ENCODE measurements at regions of chr5 and their contacts with region 1.

Region 1: GRCh38 chr5:153147891-153148623 is 342.4 kb upstream of the GRIA1 start:
- ATAC-seq: peak in 7 of 8 experiments; percentile 39 to 98 (median 65)
- H3K4me3 ChIP-seq: no peak overlapping the region
- H3K27ac ChIP-seq: no peak overlapping the region
- H3K4me1 ChIP-seq: no peaks in the 10 kb centered on the region

Region 2: DNA sequence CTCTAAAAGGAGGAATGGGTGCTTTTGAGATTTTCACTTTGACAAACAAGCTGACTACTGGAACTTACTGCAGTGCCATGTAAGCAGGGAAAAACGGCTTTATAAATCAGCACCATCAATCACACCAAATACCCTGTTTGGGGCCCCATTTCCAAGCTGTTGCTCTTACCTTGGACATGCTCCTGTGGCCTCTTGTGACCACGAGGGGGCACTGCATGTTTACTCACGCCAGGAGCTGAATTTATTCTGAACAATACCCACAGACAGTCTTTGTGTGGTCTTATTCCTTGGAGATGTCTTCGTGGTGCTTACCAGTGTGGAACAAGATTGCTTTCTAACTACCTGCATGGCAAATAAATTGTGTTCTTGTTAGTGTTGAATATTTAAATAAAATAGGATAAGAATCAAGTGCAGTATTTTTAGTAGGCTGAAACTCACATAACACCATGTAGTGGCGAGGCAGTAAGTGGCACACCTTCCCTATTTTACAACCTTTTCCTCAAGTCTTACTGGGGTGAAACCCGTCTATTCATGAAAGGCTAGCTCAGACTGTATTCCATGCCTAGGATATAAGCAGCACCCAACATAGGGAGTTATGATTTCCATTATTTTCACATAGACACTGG is 587.4 kb before region 1 on chr5:
- in situ Hi-C with region 1: loop called in 4 of 9 experiments (anchors 10 to 25 kb)
- ATAC-seq: peak; percentile 26 to 90 (median 72)
- H3K4me3 ChIP-seq: no peak overlapping the region
- H3K27ac ChIP-seq: no peak overlapping the region
- H3K4me1 ChIP-seq: peaks cover 22 to 24% of the 10 kb centered on the region in 2 donors

Region 3: GRCh38 chr5:152838241-152838786 is 309.7 kb before region 1 on chr5:
- in situ Hi-C with region 1: loop called in 1 of 9 experiments (anchors 25 kb)
- ATAC-seq: peak in 6 of 8 experiments; percentile 21 to 78 (median 42)
- H3K4me3 ChIP-seq: no peak overlapping the region
- H3K27ac ChIP-seq: no peak overlapping the region
- H3K4me1 ChIP-seq: peaks cover 0 to 5% of the 10 kb centered on the region in 2 donors

Measured in motor neuron (in vitro differentiated cells).